ENCODE measurements at regions of chr1 and their contacts with region 1.

Region 1: GRCh38 chr1:104648269-104648691 is 898.6 kb downstream of the AMY1C start:
- DNase-seq: no peak
- ATAC-seq: peak; percentile 49
- H3K4me3 Mint-ChIP-seq: no peak overlapping the region
- H3K27ac Mint-ChIP-seq: no peak overlapping the region
- H3K4me1 Mint-ChIP-seq: no peaks in the 10 kb centered on the region
- H3K27me3 Mint-ChIP-seq: no peaks in the 10 kb centered on the region
- CTCF ChIP-seq: peak; percentile 42

Region 2: GRCh38 chr1:104780470-104781078 is 132.3 kb after region 1 on chr1:
- CTCF ChIA-PET with region 1: interaction called, 3 read pairs
- POLR2A ChIA-PET with region 1: no interaction called
- intact Hi-C with region 1: loop called (anchors 2 kb)
- DNase-seq: no peak
- ATAC-seq: no peak
- H3K4me3 Mint-ChIP-seq: no peak overlapping the region
- H3K27ac Mint-ChIP-seq: no peak overlapping the region
- H3K4me1 Mint-ChIP-seq: no peaks in the 10 kb centered on the region
- H3K27me3 Mint-ChIP-seq: no peaks in the 10 kb centered on the region
- CTCF ChIP-seq: no peak

Region 3: GRCh38 chr1:104878203-104878909 is 230.1 kb after region 1 on chr1:
- CTCF ChIA-PET with region 1: interaction called, 5 read pairs
- POLR2A ChIA-PET with region 1: no interaction called
- intact Hi-C with region 1: loop called (anchors 1 kb)
- DNase-seq: no peak
- ATAC-seq: no peak
- H3K4me3 Mint-ChIP-seq: no peak overlapping the region
- H3K27ac Mint-ChIP-seq: no peak overlapping the region
- H3K4me1 Mint-ChIP-seq: no peaks in the 10 kb centered on the region
- H3K27me3 Mint-ChIP-seq: no peaks in the 10 kb centered on the region
- CTCF ChIP-seq: no peak

Region 4: GRCh38 chr1:105027838-105028471 is 379.7 kb after region 1 on chr1:
- CTCF ChIA-PET with region 1: interaction called, 3 read pairs
- POLR2A ChIA-PET with region 1: no interaction called
- intact Hi-C with region 1: loop called (anchors 1 kb)
- DNase-seq: no peak
- ATAC-seq: no peak
- H3K4me3 Mint-ChIP-seq: no peak overlapping the region
- H3K27ac Mint-ChIP-seq: no peak overlapping the region
- H3K4me1 Mint-ChIP-seq: no peaks in the 10 kb centered on the region
- H3K27me3 Mint-ChIP-seq: no peaks in the 10 kb centered on the region
- CTCF ChIP-seq: no peak

Region 5: DNA sequence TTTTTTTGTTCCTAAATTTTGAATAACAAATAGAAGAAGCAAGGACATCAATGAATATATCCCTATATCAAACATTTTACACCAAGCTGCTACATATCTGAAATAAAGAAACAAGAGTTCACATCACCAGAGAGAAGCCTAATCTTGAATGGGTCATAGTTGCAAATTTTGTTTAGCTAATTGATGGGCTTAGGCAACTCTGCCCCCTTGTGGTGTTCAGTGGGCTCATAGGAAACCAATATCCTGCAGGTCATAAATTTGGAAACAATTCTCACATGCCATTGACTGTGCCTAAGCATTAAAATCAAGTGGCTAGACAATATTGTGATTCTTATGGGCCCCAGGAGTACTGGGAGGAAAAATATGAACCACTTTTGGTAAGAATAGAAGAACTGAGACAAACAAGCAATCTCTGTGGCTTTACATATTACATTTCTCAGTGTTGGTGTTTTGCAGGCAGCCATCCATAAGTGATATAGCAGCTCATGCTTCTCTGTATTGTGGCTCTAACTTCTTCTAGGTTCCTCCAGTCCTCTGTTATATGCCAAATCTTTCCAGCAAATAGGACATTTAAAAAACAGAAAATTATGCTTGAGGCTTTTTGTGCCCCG is 1145.4 kb after region 1 on chr1:
- CTCF ChIA-PET with region 1: interaction called, 13 read pairs
- POLR2A ChIA-PET with region 1: no interaction called
- intact Hi-C with region 1: no loop called
- DNase-seq: no peak
- ATAC-seq: no peak
- H3K4me3 Mint-ChIP-seq: no peak overlapping the region
- H3K27ac Mint-ChIP-seq: no peak overlapping the region
- H3K4me1 Mint-ChIP-seq: no peaks in the 10 kb centered on the region
- H3K27me3 Mint-ChIP-seq: no peaks in the 10 kb centered on the region
- CTCF ChIP-seq: no peak